HEK293 (cell line): ENCODE measurements at regions of chr19 and their contacts with region 1.

Region 1: DNA sequence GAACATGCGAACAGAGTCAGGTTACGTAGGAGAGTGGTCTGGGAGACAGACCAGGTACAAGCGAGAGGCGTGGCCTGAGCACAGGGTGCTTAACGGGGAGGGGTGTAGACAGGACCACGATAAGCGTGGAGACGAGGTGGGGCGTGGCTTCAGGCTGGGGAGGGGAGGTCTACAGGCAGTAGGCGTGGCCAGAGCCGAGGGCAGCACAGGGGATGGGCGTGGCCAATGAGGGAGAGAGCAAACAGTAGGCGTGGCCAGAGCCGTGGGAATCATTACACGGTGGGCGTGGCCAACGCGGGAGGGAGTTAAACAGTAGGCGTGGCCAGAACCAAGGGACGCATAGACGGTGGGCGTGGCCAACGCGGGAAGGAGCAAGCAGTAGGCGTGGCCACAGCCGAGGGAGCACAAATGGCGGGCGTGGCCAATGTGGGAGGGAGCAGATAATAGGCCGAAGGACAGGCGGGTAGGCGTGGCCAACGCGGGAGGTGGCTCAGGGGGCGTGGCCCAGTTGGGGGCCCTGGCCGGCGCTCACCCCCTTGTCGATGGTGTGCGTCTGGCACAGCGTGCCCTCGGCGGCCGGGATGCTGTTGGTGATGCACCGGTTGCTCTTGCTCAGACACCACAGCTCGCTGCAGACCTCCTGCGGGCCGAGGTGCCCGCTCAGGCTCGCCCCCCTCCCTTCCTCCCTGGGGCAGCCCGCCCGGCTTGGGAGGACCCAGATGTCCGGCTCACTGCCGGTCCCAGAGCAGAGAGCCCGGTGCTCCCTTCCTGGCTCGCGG is 15.2 kb upstream of the MYO1F start:
- H3K4me3 ChIP-seq: peak overlapping the region; percentile 13; the same call in 1 of the 2 replicates
- H3K27ac ChIP-seq: no peak overlapping the region
- H3K4me1 ChIP-seq: no peaks in the 10 kb centered on the region
- CTCF ChIP-seq: no peak

Region 2: GRCh38 chr19:7224209-7224686 is 1368.2 kb before region 1 on chr19:
- CTCF ChIA-PET with region 1: interaction called, 10 read pairs
- POLR2A ChIA-PET with region 1: no interaction called
- H3K4me3 ChIP-seq: no peak overlapping the region
- H3K27ac ChIP-seq: no peak overlapping the region
- H3K4me1 ChIP-seq: no peaks in the 10 kb centered on the region
- CTCF ChIP-seq: no peak